Spleen (tissue), 13 donors: ENCODE measurements at regions of chr4 and their contacts with region 1.

Region 1: GRCh38 chr4:10164877-10165283 is 48.3 kb upstream of the WDR1 start:
- DNase-seq: no peak
- H3K4me3 ChIP-seq: no peak overlapping the region
- H3K27ac ChIP-seq: no peak overlapping the region
- H3K4me1 ChIP-seq: peaks cover 0 to 5% (median 0%) of the 10 kb centered on the region in 6 donors
- H3K27me3 ChIP-seq: peaks cover 0 to 12% (median 0%) of the 10 kb centered on the region in 7 donors
- CTCF ChIP-seq: peak in 7 of 11 experiments; percentile 40 to 61 (median 53)
- POLR2A ChIP-seq: no peak

Region 2: GRCh38 chr4:10535912-10536311 is 371.0 kb after region 1 on chr4:
- intact Hi-C with region 1: loop called (anchors 5 kb)
- DNase-seq: no peak
- H3K4me3 ChIP-seq: no peak overlapping the region
- H3K27ac ChIP-seq: no peak overlapping the region
- H3K4me1 ChIP-seq: no peaks in the 10 kb centered on the region
- H3K27me3 ChIP-seq: peaks cover 0 to 4% (median 0%) of the 10 kb centered on the region in 7 donors
- CTCF ChIP-seq: no peak
- POLR2A ChIP-seq: no peak